CD4-positive, alpha-beta T cell (primary cell): ENCODE measurements at regions of chr2 and their contacts with region 1.

Region 1: DNA sequence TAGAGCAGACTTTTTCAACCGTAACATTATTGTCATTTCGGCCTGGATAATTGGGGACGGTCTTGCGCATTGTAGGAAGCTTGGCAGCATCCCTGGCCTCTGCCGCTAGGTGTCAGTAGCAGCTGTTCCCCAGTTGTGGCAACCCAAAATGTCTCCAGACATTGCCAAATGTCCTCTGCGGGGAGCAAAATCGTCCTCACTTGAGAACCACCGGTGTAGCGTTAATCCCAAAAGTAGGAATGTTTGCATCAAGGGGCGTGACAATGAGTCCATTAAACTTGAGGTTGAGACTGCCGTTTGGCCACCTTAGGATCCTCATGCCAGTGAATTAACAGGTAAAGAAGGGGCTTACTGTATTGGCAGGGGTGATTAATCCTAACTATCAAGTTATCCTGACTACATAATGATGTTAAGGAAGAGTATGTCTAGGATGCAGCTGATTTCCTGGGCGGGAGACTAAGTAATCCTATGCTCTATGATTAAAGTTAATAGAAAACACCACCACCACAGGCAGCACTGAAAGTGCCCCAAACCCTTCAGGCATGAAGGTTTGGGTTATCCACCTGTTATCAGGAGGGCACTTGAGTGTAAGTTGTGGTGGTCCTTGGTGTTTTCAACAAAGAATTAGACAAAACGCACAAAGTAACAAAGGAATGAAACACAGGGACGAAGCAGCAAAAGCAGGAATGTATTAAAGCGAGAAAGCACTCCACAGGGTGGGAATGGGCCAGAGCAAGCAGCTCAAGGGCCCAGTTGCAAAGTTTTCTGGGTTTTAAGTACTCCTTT is 4.9 kb upstream of the ZC3H8 start:
- DNase-seq: peak; percentile 75 to 91 (median 82)
- ATAC-seq: peak; percentile 51
- H3K4me3 ChIP-seq: no peak overlapping the region
- H3K4me3 Mint-ChIP-seq: peak overlapping the region; percentile 5
- H3K27ac ChIP-seq: no peak overlapping the region
- H3K27ac Mint-ChIP-seq: no peak overlapping the region
- H3K4me1 ChIP-seq: peaks cover 15% of the 10 kb centered on the region
- H3K4me1 Mint-ChIP-seq: peaks cover 7% of the 10 kb centered on the region
- H3K27me3 ChIP-seq: peaks cover 0 to 4% of the 10 kb centered on the region in 2 experiments
- H3K27me3 Mint-ChIP-seq: no peaks in the 10 kb centered on the region
- CTCF ChIP-seq: peak; percentile 97

Region 2: DNA sequence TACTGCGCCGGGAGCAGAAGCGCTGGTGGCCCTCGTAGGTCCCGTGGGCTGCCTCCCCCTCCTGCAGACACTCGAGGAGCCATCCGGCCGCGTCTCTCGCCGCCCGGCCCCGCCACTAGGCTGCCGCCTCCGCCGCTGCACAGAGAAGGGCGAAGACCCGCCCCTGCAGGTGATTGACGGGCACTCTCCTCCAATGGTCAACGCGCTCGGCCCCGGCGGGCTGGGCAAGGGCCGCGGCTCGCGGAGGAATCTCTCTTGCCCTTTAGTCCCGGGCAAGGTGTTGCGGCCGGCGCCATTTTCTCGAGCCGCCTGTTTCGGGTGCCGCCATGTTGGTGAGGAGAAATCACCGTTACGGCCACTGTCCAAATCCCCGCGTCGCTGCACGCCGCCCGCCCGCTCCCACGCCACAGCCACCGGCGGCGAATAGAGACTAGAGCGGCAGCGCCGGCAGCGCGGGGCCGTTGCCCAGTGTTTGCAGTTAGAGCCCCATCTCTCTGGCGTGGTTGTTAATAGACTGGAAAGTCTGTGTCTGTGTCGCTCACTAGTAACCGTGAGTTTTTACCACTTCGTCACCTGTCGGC is 15.7 kb after region 1 on chr2 and contains the start of gene ZC3H6:
- CTCF ChIA-PET with region 1: interaction called, 7 read pairs
- POLR2A ChIA-PET with region 1: interaction called, 19 read pairs
- intact Hi-C with region 1: loop called (anchors 1 to 2 kb)
- DNase-seq: peak; percentile 97 to 100 (median 100)
- ATAC-seq: peak; percentile 90
- H3K4me3 ChIP-seq: peak within 1 kb of the TSS; percentile 94
- H3K4me3 Mint-ChIP-seq: peak within 1 kb of the TSS; percentile 98
- H3K27ac ChIP-seq: peak within 1 kb of the TSS; percentile 100
- H3K27ac Mint-ChIP-seq: peak within 1 kb of the TSS; percentile 100
- H3K4me1 ChIP-seq: peaks cover 8% of the 10 kb centered on the region
- H3K4me1 Mint-ChIP-seq: peaks cover 33% of the 10 kb centered on the region
- H3K27me3 ChIP-seq: no peaks in the 10 kb centered on the region
- H3K27me3 Mint-ChIP-seq: no peaks in the 10 kb centered on the region
- CTCF ChIP-seq: no peak
- total RNA-seq, gene ZC3H6: 18.0 to 21.4 TPM

Region 3: DNA sequence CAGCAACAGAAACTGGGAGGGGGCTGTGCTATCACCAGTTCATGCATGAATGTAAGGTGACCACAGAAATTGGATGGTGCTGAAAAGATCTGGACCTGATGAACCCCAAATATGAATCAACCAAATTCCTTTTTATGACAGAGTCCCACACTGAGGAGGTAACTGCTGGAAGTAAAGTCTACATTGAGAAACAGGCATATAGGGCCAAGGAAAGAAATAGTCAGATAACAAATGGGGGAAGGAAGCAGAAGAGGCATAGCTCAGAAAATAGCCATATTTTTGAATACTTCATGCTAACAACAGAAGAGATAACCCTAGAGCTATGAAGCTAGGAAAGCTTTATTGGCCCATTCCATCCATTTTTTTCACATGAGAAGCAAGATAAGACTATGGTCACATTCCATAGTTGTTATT is 41.5 kb after region 1 on chr2:
- CTCF ChIA-PET with region 1: interaction called, 4 read pairs
- POLR2A ChIA-PET with region 1: no interaction called
- intact Hi-C with region 1: loop called (anchors 1 to 5 kb)
- DNase-seq: no peak
- ATAC-seq: no peak
- H3K4me3 ChIP-seq: no peak overlapping the region
- H3K4me3 Mint-ChIP-seq: no peak overlapping the region
- H3K27ac ChIP-seq: no peak overlapping the region
- H3K27ac Mint-ChIP-seq: no peak overlapping the region
- H3K4me1 ChIP-seq: no peaks in the 10 kb centered on the region
- H3K4me1 Mint-ChIP-seq: peaks cover 7% of the 10 kb centered on the region
- H3K27me3 ChIP-seq: no peaks in the 10 kb centered on the region
- H3K27me3 Mint-ChIP-seq: no peaks in the 10 kb centered on the region
- CTCF ChIP-seq: no peak

Region 4: DNA sequence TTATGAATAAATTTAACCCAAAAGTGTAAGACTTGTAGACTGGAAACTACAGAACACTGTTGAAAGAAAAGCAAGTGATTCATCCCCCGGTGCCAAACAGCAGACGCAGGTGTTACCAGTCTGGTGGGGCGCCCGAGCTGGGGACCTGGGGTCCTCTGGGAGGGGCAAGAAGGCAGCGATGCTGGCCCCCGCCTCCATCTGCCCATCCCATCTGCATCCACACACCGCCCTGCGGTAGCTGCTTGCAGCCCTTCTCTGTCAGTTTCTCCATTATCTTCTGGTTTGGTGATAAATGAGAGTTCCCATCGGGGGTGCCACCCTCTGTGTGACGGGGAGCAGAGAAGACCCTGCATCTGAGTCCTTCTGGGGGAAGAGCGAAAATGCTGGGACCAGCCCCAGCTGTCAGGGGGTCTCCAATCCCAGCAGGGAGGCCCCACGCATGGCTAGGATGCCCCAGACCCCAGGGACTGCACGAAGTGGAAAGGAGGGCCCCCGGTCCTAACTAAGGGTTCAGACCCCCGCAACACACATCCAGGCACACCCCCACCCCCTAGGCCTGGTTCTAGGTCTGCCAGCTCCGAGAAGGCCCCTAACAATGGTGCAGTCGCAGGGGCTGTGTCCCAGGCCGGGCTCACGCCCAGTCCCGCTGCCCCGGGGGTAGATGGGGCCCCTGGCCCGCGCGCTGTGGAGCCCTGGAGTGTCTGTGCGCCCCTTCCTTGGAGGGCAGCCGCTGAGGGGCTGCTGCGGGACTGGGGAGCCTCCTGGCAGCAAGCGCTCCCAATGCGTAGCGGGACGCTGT is 174.4 kb after region 1 on chr2:
- CTCF ChIA-PET with region 1: interaction called, 7 read pairs
- POLR2A ChIA-PET with region 1: interaction called, 3 read pairs
- intact Hi-C with region 1: loop called in 1 of 2 experiments (anchors 2 kb)
- DNase-seq: peak in 1 of 14 experiments; percentile 34
- ATAC-seq: no peak
- H3K4me3 ChIP-seq: no peak overlapping the region
- H3K4me3 Mint-ChIP-seq: no peak overlapping the region
- H3K27ac ChIP-seq: no peak overlapping the region
- H3K27ac Mint-ChIP-seq: peak overlapping the region; percentile 58
- H3K4me1 ChIP-seq: peaks cover 15% of the 10 kb centered on the region
- H3K4me1 Mint-ChIP-seq: peaks cover 17% of the 10 kb centered on the region
- H3K27me3 ChIP-seq: no peaks in the 10 kb centered on the region
- H3K27me3 Mint-ChIP-seq: peaks cover 18% of the 10 kb centered on the region
- CTCF ChIP-seq: no peak